Gastrocnemius medialis (tissue), 4 donors: ENCODE measurements at regions of chr2 and their contacts with region 1.

Region 1: DNA sequence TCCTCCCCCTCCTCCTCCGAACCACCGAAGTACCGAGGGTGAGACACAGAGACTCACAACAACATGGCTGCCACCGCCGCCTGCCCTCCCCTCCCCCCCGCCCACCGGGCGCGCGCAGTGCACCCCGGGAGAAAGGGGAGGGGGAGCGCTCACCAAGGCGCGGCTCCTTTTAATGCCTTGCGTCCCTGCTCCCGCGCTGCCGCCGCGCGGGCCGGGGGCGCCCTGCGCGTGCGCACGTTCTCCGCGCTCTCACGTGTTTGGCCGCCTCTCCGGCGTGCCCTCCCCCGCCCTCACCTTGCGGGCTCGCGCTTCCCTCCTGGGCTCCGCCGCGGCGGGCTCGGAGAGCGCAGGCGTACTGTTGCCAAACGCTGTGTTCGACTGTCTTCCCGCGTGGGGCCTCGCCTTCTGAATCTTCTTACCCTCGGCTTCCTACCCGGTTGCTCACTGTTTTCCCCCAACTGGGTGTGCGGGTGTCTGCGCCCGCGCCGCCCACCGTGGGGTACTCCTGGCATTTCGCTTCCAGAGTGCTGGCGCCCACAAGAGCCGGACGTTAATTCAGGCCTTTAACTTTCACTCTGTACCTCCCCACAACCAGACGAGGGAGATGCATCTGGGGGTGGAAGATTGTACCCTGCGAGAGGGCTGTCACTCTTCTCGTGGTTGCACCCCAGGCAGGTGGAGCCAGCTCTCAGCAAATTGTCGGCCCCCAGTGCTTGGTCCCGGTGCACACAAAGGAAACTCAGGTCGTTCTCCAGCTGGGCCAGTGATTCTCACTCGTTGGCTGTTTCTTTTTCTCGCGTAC is at the start of gene PUM2:
- DNase-seq: peak; percentile 88 to 95
- ATAC-seq: peak; percentile 87 to 89
- H3K4me3 ChIP-seq: peak within 1 kb of the TSS; percentile 86 to 98 (median 95)
- H3K27ac ChIP-seq: peak within 1 kb of the TSS; percentile 93 to 99 (median 98)
- H3K4me1 ChIP-seq: peaks cover 42 to 44% of the 10 kb centered on the region in 2 donors
- H3K27me3 ChIP-seq: no peaks in the 10 kb centered on the region
- CTCF ChIP-seq: peak in 2 of 5 experiments; percentile 9 to 23
- POLR2A ChIP-seq: peak; percentile 53 to 71
- total RNA-seq, gene PUM2: 26.0 to 36.4 (median 29.6) TPM

Region 2: DNA sequence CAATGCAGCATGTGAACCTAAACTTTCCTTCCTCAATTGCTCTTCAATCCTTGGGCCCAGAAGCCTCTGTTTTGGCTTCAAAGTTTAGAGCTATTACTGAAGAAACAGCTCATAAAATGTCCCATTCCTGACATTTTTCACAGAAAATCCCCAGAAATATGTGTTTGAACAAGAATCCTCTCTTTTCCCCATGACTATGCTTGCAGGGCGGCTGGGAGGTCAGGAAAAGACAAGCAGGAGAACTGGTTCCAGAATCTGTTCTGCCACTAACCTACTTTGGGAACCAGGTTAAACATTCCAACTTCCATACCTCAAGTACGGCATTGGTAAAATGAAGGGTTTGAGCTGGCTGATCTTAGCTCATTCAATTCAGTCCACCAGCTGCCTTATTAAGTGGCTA is 904.6 kb before region 1 on chr2:
- in situ Hi-C with region 1: no loop called
- intact Hi-C with region 1: no loop called
- DNase-seq: no peak
- ATAC-seq: no peak
- H3K4me3 ChIP-seq: no peak overlapping the region
- H3K27ac ChIP-seq: no peak overlapping the region
- H3K4me1 ChIP-seq: no peaks in the 10 kb centered on the region
- H3K27me3 ChIP-seq: no peaks in the 10 kb centered on the region
- CTCF ChIP-seq: no peak
- POLR2A ChIP-seq: no peak

Region 3: GRCh38 chr2:20391951-20392699 is 41.2 kb after region 1 on chr2:
- in situ Hi-C with region 1: no loop called
- intact Hi-C with region 1: no loop called
- DNase-seq: no peak
- ATAC-seq: no peak
- H3K4me3 ChIP-seq: no peak overlapping the region
- H3K27ac ChIP-seq: no peak overlapping the region
- H3K4me1 ChIP-seq: no peaks in the 10 kb centered on the region
- H3K27me3 ChIP-seq: no peaks in the 10 kb centered on the region
- CTCF ChIP-seq: no peak
- POLR2A ChIP-seq: no peak

Region 4: GRCh38 chr2:20424300-20425290 is 73.6 kb after region 1 on chr2:
- in situ Hi-C with region 1: no loop called
- intact Hi-C with region 1: no loop called
- DNase-seq: peak; percentile 37 to 65
- ATAC-seq: no peak
- H3K4me3 ChIP-seq: no peak overlapping the region
- H3K27ac ChIP-seq: peak overlapping the region in 2 of 4 donors; percentile 40 to 54
- H3K4me1 ChIP-seq: peaks cover 24 to 32% of the 10 kb centered on the region in 2 donors
- H3K27me3 ChIP-seq: no peaks in the 10 kb centered on the region
- CTCF ChIP-seq: no peak
- POLR2A ChIP-seq: peak; percentile 7 to 30

Region 5: GRCh38 chr2:20642055-20642971 is 291.4 kb after region 1 on chr2:
- in situ Hi-C with region 1: loop called in 1 of 4 experiments (anchors 10 kb)
- intact Hi-C with region 1: no loop called
- DNase-seq: peak; percentile 56 to 75
- ATAC-seq: peak; percentile 84 to 89
- H3K4me3 ChIP-seq: no peak overlapping the region
- H3K27ac ChIP-seq: peak overlapping the region in 3 of 4 donors; percentile 29 to 52 (median 42)
- H3K4me1 ChIP-seq: peaks cover 0 to 14% of the 10 kb centered on the region in 2 donors
- H3K27me3 ChIP-seq: no peaks in the 10 kb centered on the region
- CTCF ChIP-seq: peak; percentile 88 to 99 (median 97)
- POLR2A ChIP-seq: no peak

Region 6: GRCh38 chr2:20650880-20651730 is 300.2 kb after region 1 on chr2 and contains the start of gene HS1BP3:
- in situ Hi-C with region 1: loop called in 1 of 4 experiments (anchors 10 kb)
- intact Hi-C with region 1: loop called (anchors 2 kb)
- DNase-seq: peak; percentile 67 to 76
- ATAC-seq: peak; percentile 89 to 93
- H3K4me3 ChIP-seq: peak within 1 kb of the TSS; percentile 73 to 99 (median 94)
- H3K27ac ChIP-seq: peak within 1 kb of the TSS; percentile 78 to 92 (median 88)
- H3K4me1 ChIP-seq: peaks cover 15 to 18% of the 10 kb centered on the region in 2 donors
- H3K27me3 ChIP-seq: no peaks in the 10 kb centered on the region
- CTCF ChIP-seq: peak in 4 of 5 experiments; percentile 98 to 100 (median 99)
- POLR2A ChIP-seq: peak; percentile 81 to 83
- total RNA-seq, gene HS1BP3: 16.6 to 26.9 (median 19.4) TPM

Region 7: GRCh38 chr2:20880221-20880771 is 529.3 kb after region 1 on chr2:
- in situ Hi-C with region 1: no loop called
- intact Hi-C with region 1: no loop called
- DNase-seq: no peak
- ATAC-seq: no peak
- H3K4me3 ChIP-seq: no peak overlapping the region
- H3K27ac ChIP-seq: no peak overlapping the region
- H3K4me1 ChIP-seq: no peaks in the 10 kb centered on the region
- H3K27me3 ChIP-seq: no peaks in the 10 kb centered on the region
- CTCF ChIP-seq: no peak
- POLR2A ChIP-seq: no peak

Region 8: GRCh38 chr2:20962939-20963557 is 612.1 kb after region 1 on chr2:
- in situ Hi-C with region 1: loop called in 1 of 4 experiments (anchors 25 kb)
- intact Hi-C with region 1: no loop called
- DNase-seq: peak; percentile 40 to 56
- ATAC-seq: peak; percentile 83 to 90
- H3K4me3 ChIP-seq: no peak overlapping the region
- H3K27ac ChIP-seq: no peak overlapping the region
- H3K4me1 ChIP-seq: peaks cover 6 to 9% of the 10 kb centered on the region in 2 donors
- H3K27me3 ChIP-seq: no peaks in the 10 kb centered on the region
- CTCF ChIP-seq: peak; percentile 55 to 86 (median 83)
- POLR2A ChIP-seq: no peak